CD4-positive, alpha-beta memory T cell (primary cell): ENCODE measurements at regions of chr2 and their contacts with region 1.

Region 1: DNA sequence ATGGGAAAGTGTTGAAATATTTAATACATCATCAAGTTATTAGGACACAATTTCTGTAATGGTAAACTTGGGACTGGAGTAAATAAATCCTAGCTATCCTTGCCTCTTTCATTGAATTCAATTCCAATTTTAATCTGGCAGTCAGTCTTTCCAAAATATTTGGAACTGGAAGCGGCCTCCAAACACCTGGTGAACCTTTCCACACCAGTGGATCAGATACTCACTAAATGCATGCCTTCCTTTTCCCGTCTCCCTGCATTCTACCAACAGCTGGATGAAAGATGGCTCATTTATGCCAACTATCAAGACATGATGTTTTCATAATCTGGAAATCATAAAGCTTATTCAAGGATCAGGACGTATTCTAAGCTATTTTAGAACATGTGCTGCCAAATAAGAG is 488.2 kb upstream of the SPHKAP start:
- DNase-seq: no peak
- H3K4me3 ChIP-seq: no peak overlapping the region
- H3K4me3 Mint-ChIP-seq: no peak overlapping the region
- H3K27ac ChIP-seq: no peak overlapping the region
- H3K27ac Mint-ChIP-seq: no peak overlapping the region
- H3K4me1 ChIP-seq: no peaks in the 10 kb centered on the region
- H3K4me1 Mint-ChIP-seq: no peaks in the 10 kb centered on the region
- H3K27me3 ChIP-seq: no peaks in the 10 kb centered on the region
- H3K27me3 Mint-ChIP-seq: no peaks in the 10 kb centered on the region

Region 2: DNA sequence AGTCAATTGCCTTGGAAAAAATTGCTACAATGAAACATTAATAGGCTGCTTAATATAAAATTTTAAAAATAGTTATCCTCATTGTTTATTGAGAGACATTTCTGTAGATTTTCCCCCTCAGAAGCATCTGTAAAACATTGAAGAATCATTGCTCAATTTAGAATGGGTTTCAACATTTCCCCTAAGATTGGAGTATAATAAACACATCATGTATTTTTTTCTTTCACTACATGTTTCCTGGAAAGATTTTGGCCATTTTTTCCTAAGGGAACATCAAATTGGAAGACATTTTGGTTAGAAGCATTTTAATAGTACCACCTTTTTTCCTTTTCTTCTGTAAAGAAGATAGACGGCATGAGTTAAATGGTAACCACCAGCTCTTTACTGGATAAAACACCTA is 45.0 kb before region 1 on chr2:
- CTCF ChIA-PET with region 1: no interaction called
- POLR2A ChIA-PET with region 1: no interaction called
- intact Hi-C with region 1: loop called (anchors 1 kb)
- DNase-seq: no peak
- H3K4me3 ChIP-seq: no peak overlapping the region
- H3K4me3 Mint-ChIP-seq: no peak overlapping the region
- H3K27ac ChIP-seq: no peak overlapping the region
- H3K27ac Mint-ChIP-seq: no peak overlapping the region
- H3K4me1 ChIP-seq: no peaks in the 10 kb centered on the region
- H3K4me1 Mint-ChIP-seq: no peaks in the 10 kb centered on the region
- H3K27me3 ChIP-seq: no peaks in the 10 kb centered on the region
- H3K27me3 Mint-ChIP-seq: no peaks in the 10 kb centered on the region

Region 3: GRCh38 chr2:228703152-228703551 is 33.5 kb after region 1 on chr2:
- CTCF ChIA-PET with region 1: no interaction called
- POLR2A ChIA-PET with region 1: no interaction called
- intact Hi-C with region 1: no loop called
- DNase-seq: no peak
- H3K4me3 ChIP-seq: no peak overlapping the region
- H3K4me3 Mint-ChIP-seq: no peak overlapping the region
- H3K27ac ChIP-seq: no peak overlapping the region
- H3K27ac Mint-ChIP-seq: no peak overlapping the region
- H3K4me1 ChIP-seq: no peaks in the 10 kb centered on the region
- H3K4me1 Mint-ChIP-seq: no peaks in the 10 kb centered on the region
- H3K27me3 ChIP-seq: no peaks in the 10 kb centered on the region
- H3K27me3 Mint-ChIP-seq: no peaks in the 10 kb centered on the region